Activated CD4-positive, alpha-beta T cell treated with anti-CD3 and anti-CD28 coated beads for 36 hours (primary cell): ENCODE measurements at regions of chr10 and their contacts with region 1.

Region 1: GRCh38 chr10:67788025-67788886 is 49.7 kb downstream of the DNAJC12 start:
- DNase-seq: peak; percentile 92
- ATAC-seq: peak; percentile 79
- H3K4me3 Mint-ChIP-seq: no peak overlapping the region
- H3K27ac Mint-ChIP-seq: peak overlapping the region; percentile 66
- H3K4me1 Mint-ChIP-seq: peaks cover 35% of the 10 kb centered on the region
- H3K27me3 Mint-ChIP-seq: no peaks in the 10 kb centered on the region

Region 2: GRCh38 chr10:67697724-67698131 is 90.5 kb before region 1 on chr10:
- CTCF ChIA-PET with region 1: interaction called, 24 read pairs
- POLR2A ChIA-PET with region 1: no interaction called
- intact Hi-C with region 1: no loop called
- DNase-seq: peak; percentile 19
- ATAC-seq: peak; percentile 73
- H3K4me3 Mint-ChIP-seq: no peak overlapping the region
- H3K27ac Mint-ChIP-seq: no peak overlapping the region
- H3K4me1 Mint-ChIP-seq: peaks cover 10% of the 10 kb centered on the region
- H3K27me3 Mint-ChIP-seq: peaks cover 24% of the 10 kb centered on the region

Region 3: DNA sequence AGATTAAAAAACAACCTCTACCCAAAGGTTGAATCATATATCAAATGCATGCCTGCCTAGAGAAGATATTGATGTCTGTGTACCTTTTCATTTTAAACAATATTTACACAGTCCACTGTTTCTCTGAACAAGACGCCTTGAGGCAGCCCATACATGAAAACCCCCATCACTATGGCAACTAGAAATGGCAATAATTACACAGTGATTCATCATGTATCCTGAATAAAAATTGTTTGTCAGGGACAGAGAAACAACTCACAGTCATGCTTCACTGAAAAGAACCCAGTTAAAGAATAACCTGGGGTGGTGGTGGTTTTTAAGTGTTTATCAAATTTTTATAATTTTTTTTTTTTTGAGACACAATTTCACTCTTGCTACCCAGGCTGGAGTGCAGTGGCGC is 30.1 kb after region 1 on chr10:
- CTCF ChIA-PET with region 1: interaction called, 5 read pairs
- POLR2A ChIA-PET with region 1: interaction called, 4 read pairs
- intact Hi-C with region 1: loop called (anchors 1 to 2 kb)
- DNase-seq: no peak
- ATAC-seq: peak; percentile 16
- H3K4me3 Mint-ChIP-seq: no peak overlapping the region
- H3K27ac Mint-ChIP-seq: no peak overlapping the region
- H3K4me1 Mint-ChIP-seq: peaks cover 29% of the 10 kb centered on the region
- H3K27me3 Mint-ChIP-seq: peaks cover 3% of the 10 kb centered on the region

Region 4: DNA sequence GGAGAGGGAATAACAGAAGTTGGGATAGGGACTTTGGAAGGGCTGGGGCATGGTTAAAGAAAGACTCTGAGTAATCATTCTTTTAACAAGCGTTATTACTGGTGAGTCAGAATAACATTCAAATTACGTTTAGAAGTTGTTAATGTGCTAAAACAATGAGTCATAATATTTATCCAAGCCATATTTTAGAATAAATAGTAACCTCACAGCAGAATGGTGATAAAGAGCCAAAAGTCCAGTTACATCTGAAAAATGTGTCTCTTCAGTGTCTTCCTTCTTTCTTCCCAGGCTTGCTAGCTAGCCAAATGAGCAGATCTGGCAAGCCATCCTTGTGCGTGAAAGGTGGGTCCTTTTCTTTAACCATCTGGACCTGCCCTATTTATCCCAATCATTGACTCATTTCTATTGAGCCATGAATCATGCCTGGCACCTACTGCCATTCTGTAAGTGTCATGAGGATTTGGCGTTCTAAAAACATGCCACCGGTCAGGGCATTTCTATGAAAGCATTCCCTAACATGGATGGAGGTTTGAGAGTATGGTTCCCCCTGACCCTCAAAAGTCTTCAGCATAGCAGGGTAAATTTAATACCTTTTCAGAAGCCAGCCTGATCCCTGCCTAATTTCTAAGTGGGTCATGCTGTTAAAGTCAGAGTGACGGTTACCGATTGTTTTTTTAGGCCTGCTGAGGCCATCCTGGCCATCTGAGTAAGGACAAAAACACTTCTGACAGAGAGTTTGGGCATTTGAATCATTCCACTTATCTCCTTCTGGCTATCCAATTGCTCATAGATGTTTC is 347.9 kb after region 1 on chr10:
- CTCF ChIA-PET with region 1: no interaction called
- POLR2A ChIA-PET with region 1: no interaction called
- intact Hi-C with region 1: no loop called
- DNase-seq: no peak
- ATAC-seq: no peak
- H3K4me3 Mint-ChIP-seq: no peak overlapping the region
- H3K27ac Mint-ChIP-seq: no peak overlapping the region
- H3K4me1 Mint-ChIP-seq: no peaks in the 10 kb centered on the region
- H3K27me3 Mint-ChIP-seq: peaks cover 8% of the 10 kb centered on the region

Region 5: GRCh38 chr10:68156373-68157185 is 368.3 kb after region 1 on chr10:
- CTCF ChIA-PET with region 1: interaction called, 61 read pairs
- POLR2A ChIA-PET with region 1: no interaction called
- intact Hi-C with region 1: loop called (anchors 1 kb)
- DNase-seq: peak; percentile 76
- ATAC-seq: peak; percentile 67
- H3K4me3 Mint-ChIP-seq: no peak overlapping the region
- H3K27ac Mint-ChIP-seq: no peak overlapping the region
- H3K4me1 Mint-ChIP-seq: peaks cover 2% of the 10 kb centered on the region
- H3K27me3 Mint-ChIP-seq: peaks cover 1% of the 10 kb centered on the region

Region 6: GRCh38 chr10:68301790-68302502 is 513.7 kb after region 1 on chr10:
- CTCF ChIA-PET with region 1: interaction called, 17 read pairs
- POLR2A ChIA-PET with region 1: no interaction called
- intact Hi-C with region 1: loop called (anchors 2 kb)
- DNase-seq: no peak
- ATAC-seq: peak; percentile 55
- H3K4me3 Mint-ChIP-seq: no peak overlapping the region
- H3K27ac Mint-ChIP-seq: no peak overlapping the region
- H3K4me1 Mint-ChIP-seq: no peaks in the 10 kb centered on the region
- H3K27me3 Mint-ChIP-seq: no peaks in the 10 kb centered on the region